ENCODE measurements at regions of chr1 and their contacts with region 1.

Region 1: GRCh38 chr1:145996433-145997015 is at the start of gene TXNIP:
- DNase-seq: peak; percentile 97
- ATAC-seq: peak; percentile 82
- H3K4me3 Mint-ChIP-seq: peak within 1 kb of the TSS; percentile 92
- H3K27ac Mint-ChIP-seq: peak within 1 kb of the TSS; percentile 99
- H3K4me1 Mint-ChIP-seq: peaks cover 68% of the 10 kb centered on the region
- H3K27me3 Mint-ChIP-seq: no peaks in the 10 kb centered on the region
- total RNA-seq, gene TXNIP: 112 TPM

Region 2: DNA sequence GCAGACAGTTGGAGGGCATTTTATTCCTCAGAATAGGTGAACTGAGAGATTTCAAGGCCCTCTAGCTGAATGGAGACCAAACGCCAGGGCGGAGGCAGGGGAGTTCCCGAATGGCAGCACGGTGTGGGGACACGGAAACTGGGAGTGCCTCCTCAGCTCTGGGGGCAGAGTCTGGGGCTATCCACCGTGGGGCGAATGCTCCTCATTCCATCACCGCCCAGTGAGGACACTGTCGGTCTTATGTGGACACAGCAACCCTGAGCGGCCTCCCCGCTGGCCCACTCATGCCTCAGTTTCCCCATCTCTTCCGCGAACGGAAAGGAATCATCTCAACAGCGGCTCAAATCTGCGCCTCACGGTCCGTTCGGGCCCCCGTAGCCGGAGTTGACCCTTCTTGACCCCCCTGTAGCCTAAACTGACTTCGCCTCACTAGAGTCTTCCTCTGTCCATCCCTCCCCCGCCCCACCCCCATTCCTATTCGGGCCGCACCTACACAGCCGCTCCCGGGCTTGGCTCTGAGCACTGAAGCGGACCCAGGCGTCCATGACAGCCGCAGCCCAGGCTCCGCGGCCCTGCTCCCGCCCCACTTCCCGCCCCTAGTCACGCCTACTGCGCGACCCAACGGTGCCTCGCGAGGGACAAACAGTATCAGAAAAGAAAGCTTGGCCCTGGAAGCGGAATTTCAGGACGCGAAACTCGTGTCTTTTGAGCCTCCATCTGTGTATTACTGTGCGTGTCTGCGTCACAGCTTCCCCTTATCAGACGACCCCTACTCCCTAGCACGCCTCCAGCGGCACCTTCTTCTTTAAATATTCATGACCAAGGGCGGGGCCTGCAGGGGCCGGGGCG is 78.2 kb before region 1 on chr1 and contains the start of gene PEX11B:
- CTCF ChIA-PET with region 1: no interaction called
- POLR2A ChIA-PET with region 1: interaction called, 4 read pairs
- intact Hi-C with region 1: loop called in 1 of 2 experiments (anchors 2 kb)
- DNase-seq: peak; percentile 94
- ATAC-seq: peak; percentile 89
- H3K4me3 Mint-ChIP-seq: peak within 1 kb of the TSS; percentile 93
- H3K27ac Mint-ChIP-seq: peak within 1 kb of the TSS; percentile 94
- H3K4me1 Mint-ChIP-seq: peaks cover 46% of the 10 kb centered on the region
- H3K27me3 Mint-ChIP-seq: no peaks in the 10 kb centered on the region
- total RNA-seq, gene PEX11B: 22.6 to 26.4 TPM

Region 3: DNA sequence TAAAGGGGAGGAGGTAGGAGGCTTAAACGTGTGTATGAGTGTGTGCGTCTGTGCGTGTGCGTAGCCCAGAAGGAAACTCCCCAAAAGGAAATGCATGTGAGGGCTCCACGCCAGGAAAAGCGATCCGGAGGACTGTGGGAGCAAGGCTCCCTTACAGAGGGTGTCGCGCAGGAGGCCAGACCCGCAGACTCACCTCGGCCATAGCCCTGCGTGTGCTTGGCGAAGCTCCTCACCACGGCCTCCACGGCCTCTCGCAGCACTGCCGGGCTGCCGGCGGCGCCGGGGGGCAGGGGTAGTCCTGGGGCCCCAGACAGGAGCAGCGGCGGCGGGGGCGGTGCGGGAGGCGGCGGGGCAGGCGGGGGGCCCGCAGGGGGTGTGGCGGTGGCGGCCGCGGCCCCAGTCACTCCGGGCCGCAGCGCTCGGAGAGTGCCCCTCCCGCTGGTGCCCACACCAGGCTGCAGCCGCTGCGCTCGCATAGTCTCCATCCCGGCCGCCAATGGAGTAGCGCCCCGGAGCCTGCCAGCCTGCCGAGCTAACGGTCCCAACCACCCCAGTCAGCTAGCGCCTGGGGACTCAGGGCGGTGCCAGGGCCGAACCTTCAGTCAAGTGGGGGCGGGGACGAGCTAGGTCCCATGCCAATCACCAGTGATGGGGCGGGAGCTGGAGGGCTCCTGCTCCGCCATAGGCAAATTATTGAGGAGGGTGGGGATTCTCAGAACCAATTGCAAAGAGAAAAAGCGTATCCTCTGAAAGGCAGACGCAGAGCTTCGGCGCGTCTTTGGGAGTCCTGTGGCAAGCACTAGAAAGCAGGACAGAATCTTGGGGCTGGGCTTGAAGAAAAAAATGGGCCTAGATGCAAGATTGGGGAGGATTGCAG is 38.8 kb before region 1 on chr1 and contains the start of gene LIX1L:
- CTCF ChIA-PET with region 1: interaction called, 4 read pairs
- POLR2A ChIA-PET with region 1: interaction called, 4 read pairs
- intact Hi-C with region 1: loop called in 1 of 2 experiments (anchors 1 kb)
- DNase-seq: peak; percentile 98
- ATAC-seq: peak; percentile 89
- H3K4me3 Mint-ChIP-seq: peak within 1 kb of the TSS; percentile 87
- H3K27ac Mint-ChIP-seq: peak within 1 kb of the TSS; percentile 93
- H3K4me1 Mint-ChIP-seq: peaks cover 59% of the 10 kb centered on the region
- H3K27me3 Mint-ChIP-seq: no peaks in the 10 kb centered on the region
- total RNA-seq, gene LIX1L: 44.9 to 49.4 TPM

Region 4: DNA sequence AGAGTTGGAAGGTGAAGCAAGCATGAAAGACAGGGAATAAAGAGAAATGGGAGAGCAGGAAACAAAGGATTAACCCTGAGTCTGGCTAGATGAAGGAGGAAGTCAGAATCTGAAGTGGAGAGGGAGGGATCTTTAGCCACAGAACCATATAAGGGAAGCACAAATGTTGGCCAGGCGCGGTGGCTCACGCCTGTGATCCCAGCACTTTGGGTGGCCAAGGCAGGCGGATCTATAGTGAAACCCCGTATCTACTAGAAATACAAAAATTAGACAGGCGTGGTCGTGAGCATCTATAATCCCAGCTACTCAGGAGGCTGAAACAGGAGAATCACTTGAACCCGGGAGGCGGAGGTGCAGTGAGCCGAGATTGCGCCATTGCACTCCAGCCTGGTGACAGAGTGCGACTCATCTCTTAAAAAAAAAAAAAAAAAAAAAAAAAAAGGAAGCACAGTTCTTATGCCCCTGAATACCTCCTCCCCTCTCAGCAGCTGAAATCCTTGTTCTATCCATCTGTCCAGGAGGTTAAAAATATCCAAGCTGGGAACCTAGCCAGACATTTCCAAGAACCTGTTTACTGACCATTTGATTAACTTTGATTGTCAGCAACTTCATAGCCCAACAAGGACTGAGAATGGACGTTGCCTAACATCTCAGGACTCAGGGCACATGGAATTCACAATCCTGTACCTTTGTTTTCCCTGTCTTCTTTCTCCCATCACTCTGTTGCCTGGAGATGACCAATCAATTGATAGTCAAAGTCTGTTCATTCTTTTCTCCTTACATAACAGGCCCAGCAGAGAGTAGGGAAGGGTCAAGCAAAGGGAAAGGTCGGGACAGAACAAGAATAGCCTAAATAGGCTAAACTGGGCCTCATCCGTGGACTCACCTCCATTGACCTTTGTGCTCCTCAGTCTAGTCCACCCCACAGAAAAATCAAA is 10.8 kb before region 1 on chr1:
- CTCF ChIA-PET with region 1: interaction called, 161 read pairs
- POLR2A ChIA-PET with region 1: interaction called, 127 read pairs
- intact Hi-C with region 1: loop called in 1 of 2 experiments (anchors 1 kb)
- DNase-seq: peak; percentile 39
- ATAC-seq: no peak
- H3K4me3 Mint-ChIP-seq: no peak overlapping the region
- H3K27ac Mint-ChIP-seq: peak overlapping the region; percentile 52
- H3K4me1 Mint-ChIP-seq: peaks cover 39% of the 10 kb centered on the region
- H3K27me3 Mint-ChIP-seq: no peaks in the 10 kb centered on the region

Region 5: DNA sequence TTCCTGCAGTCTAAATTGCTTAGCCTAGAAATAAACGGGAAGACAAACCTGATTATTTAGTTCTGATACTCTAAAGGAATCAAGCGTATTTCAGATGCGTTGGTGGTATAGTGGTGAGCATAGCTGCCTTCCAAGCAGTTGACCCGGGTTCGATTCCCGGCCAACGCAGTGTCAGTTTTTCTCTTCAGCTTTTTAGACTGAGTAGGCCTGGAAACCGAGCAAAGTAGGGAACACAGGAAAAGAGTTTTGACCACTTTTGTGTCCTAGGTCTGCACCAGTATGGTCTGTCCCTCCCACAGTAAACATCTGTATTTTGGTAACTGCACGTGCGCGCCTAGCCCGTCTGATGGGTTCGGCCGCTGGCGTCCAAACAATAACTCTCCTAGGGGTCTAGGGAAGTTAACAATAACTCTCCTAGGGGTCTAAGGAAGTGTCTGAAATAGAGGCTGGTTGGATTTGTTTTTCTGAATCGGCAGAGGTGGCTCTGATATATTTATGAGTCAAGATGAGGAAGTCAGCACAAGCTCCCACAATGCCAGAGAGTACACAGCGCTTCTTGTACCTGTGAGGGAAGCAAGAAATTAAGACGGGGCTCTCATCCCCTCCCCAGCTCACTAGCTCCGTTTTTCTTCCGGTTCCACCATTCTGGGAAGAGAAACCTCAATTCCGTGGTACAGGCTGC is 40.6 kb after region 1 on chr1:
- CTCF ChIA-PET with region 1: interaction called, 4 read pairs
- POLR2A ChIA-PET with region 1: interaction called, 3 read pairs
- intact Hi-C with region 1: loop called (anchors 1 to 2 kb)
- DNase-seq: peak; percentile 91
- ATAC-seq: peak; percentile 45
- H3K4me3 Mint-ChIP-seq: peak overlapping the region; percentile 95
- H3K27ac Mint-ChIP-seq: peak overlapping the region; percentile 98
- H3K4me1 Mint-ChIP-seq: peaks cover 36% of the 10 kb centered on the region
- H3K27me3 Mint-ChIP-seq: peaks cover 2% of the 10 kb centered on the region

Measured in activated CD4-positive, alpha-beta T cell treated with anti-CD3 and anti-CD28 coated beads for 36 hours (primary cell).